Naive thymus-derived CD4-positive, alpha-beta T cell (primary cell): ENCODE measurements at regions of chr12 and their contacts with region 1.

Region 1: DNA sequence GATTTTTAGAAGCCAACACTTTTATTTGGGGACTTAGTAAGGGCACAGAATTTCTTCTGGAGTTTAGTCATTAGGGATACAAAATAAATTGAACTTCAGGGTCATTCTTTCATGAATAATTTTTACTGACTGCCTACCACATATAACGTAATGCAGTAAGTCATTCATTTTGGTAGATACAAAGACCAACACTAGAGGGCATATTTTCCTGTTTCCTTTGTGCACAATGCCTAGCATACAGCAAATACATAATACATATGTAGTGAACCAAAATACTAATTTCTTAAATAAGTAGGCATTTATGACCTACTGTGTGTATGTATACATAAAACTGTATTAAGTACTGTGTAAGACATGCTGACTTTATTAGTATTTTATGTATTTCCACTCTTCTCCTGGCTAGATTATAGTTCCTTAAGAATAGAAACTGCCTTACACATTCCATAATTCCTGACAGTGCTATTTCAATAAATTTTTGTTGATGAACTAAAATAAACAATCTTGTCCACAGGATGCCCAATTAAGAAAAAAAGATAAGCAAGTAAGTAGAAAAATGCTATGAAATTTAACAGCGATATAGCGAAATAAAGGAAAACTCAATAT is 47.9 kb downstream of the PPP1R12A start:
- DNase-seq: peak in 6 of 9 donors; percentile 10 to 45 (median 36)
- ATAC-seq: peak; percentile 91
- H3K4me3 ChIP-seq: no peak overlapping the region
- H3K4me3 Mint-ChIP-seq: peak overlapping the region in 3 of 10 donors; percentile 10 to 28 (median 11)
- H3K27ac ChIP-seq: no peak overlapping the region
- H3K27ac Mint-ChIP-seq: peak overlapping the region in 1 of 9 donors; percentile 5
- H3K4me1 ChIP-seq: peaks cover 10 to 26% of the 10 kb centered on the region in 2 donors
- H3K4me1 Mint-ChIP-seq: peaks cover 26 to 93% (median 86%) of the 10 kb centered on the region in 7 donors
- H3K27me3 ChIP-seq: no peaks in the 10 kb centered on the region
- H3K27me3 Mint-ChIP-seq: no peaks in the 10 kb centered on the region

Region 2: GRCh38 chr12:79871621-79872020 is 15.4 kb before region 1 on chr12:
- CTCF ChIA-PET with region 1: no interaction called
- POLR2A ChIA-PET with region 1: interaction called, 3 read pairs
- intact Hi-C with region 1: loop called in 1 of 2 experiments (anchors 2 kb)
- DNase-seq: no peak
- ATAC-seq: no peak
- H3K4me3 ChIP-seq: no peak overlapping the region
- H3K4me3 Mint-ChIP-seq: no peak overlapping the region
- H3K27ac ChIP-seq: no peak overlapping the region
- H3K27ac Mint-ChIP-seq: peak overlapping the region in 1 of 9 donors; percentile 38
- H3K4me1 ChIP-seq: peaks cover 0 to 6% of the 10 kb centered on the region in 2 donors
- H3K4me1 Mint-ChIP-seq: peaks cover 16 to 72% (median 55%) of the 10 kb centered on the region in 7 donors
- H3K27me3 ChIP-seq: no peaks in the 10 kb centered on the region
- H3K27me3 Mint-ChIP-seq: no peaks in the 10 kb centered on the region

Region 3: GRCh38 chr12:79935021-79935623 is 48.1 kb after region 1 on chr12 and contains the start of gene PPP1R12A:
- CTCF ChIA-PET with region 1: interaction called, 3 read pairs
- POLR2A ChIA-PET with region 1: interaction called, 3 read pairs
- intact Hi-C with region 1: loop called (anchors 1 to 2 kb)
- DNase-seq: peak; percentile 92 to 97 (median 94)
- ATAC-seq: peak; percentile 92
- H3K4me3 ChIP-seq: peak within 1 kb of the TSS; percentile 89
- H3K4me3 Mint-ChIP-seq: peak within 1 kb of the TSS; percentile 88 to 100 (median 94)
- H3K27ac ChIP-seq: peak within 1 kb of the TSS; percentile 85
- H3K27ac Mint-ChIP-seq: peak within 1 kb of the TSS; percentile 80 to 99 (median 93)
- H3K4me1 ChIP-seq: peaks cover 6 to 17% of the 10 kb centered on the region in 2 donors
- H3K4me1 Mint-ChIP-seq: peaks cover 34 to 53% (median 47%) of the 10 kb centered on the region in 7 donors
- H3K27me3 ChIP-seq: no peaks in the 10 kb centered on the region
- H3K27me3 Mint-ChIP-seq: peaks cover 0 to 2% (median 0%) of the 10 kb centered on the region in 5 donors
- total RNA-seq, gene PPP1R12A: 72.7 to 111 (median 103) TPM

Region 4: DNA sequence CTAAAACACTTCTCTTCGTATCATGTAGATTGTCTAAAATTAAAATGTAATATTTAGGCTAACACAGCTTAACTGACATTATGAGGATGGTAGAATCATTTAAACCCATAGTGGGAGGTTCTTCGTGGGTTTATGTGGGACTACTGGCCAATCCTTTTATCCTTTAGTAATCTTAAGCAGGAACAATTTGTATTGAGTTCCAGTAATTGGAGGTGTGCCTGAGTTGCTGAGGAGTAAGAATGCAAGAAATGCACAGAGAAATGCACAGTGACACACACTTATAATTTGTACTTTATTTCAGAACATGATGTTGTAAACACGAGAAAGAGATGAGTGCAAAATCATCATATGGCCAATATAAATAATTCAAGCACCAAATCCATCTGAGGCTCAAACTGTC is 234.6 kb after region 1 on chr12:
- CTCF ChIA-PET with region 1: no interaction called
- POLR2A ChIA-PET with region 1: no interaction called
- intact Hi-C with region 1: loop called in 1 of 2 experiments (anchors 5 kb)
- DNase-seq: no peak
- ATAC-seq: no peak
- H3K4me3 ChIP-seq: no peak overlapping the region
- H3K4me3 Mint-ChIP-seq: no peak overlapping the region
- H3K27ac ChIP-seq: no peak overlapping the region
- H3K27ac Mint-ChIP-seq: no peak overlapping the region
- H3K4me1 ChIP-seq: no peaks in the 10 kb centered on the region
- H3K4me1 Mint-ChIP-seq: no peaks in the 10 kb centered on the region
- H3K27me3 ChIP-seq: no peaks in the 10 kb centered on the region
- H3K27me3 Mint-ChIP-seq: peaks cover 0 to 8% (median 0%) of the 10 kb centered on the region in 5 donors

Region 5: DNA sequence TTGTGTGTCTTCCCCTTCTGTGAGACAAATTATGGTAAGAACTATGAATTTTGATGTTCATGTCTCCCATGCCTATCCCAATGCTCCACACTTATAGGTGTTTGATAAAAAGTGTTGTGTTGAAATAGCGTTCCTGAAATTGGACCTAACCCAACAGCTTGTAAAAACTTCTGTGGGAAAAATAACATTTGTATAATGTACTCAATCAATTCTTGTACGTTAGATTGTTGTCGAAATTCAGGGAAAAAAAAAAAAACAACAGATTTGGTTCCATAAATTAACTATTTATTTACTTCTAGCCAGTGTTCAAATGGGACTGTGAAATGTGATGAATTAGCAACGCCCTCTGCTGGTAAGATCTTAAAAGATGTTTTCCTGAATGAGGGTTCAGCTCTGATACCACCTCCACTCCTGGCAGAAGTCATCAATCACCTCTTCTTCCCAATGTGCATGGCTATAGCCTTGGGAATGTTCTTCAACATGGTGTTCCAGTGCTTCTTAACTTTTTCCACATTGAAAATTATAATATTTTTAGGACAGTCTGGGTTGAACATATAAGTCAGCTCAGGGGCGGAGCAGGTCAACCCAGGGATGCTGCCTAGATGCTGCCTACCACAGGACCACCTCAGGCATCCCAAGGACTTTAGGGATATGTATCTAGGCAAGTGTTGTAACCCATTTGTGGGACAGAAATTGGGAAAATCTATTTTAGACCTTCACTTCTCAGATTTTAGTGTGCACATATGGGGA is 383.0 kb after region 1 on chr12:
- CTCF ChIA-PET with region 1: interaction called, 5 read pairs
- POLR2A ChIA-PET with region 1: no interaction called
- intact Hi-C with region 1: loop called (anchors 1 kb)
- DNase-seq: peak in 3 of 9 donors; percentile 3 to 16 (median 4)
- ATAC-seq: no peak
- H3K4me3 ChIP-seq: no peak overlapping the region
- H3K4me3 Mint-ChIP-seq: no peak overlapping the region
- H3K27ac ChIP-seq: no peak overlapping the region
- H3K27ac Mint-ChIP-seq: no peak overlapping the region
- H3K4me1 ChIP-seq: no peaks in the 10 kb centered on the region
- H3K4me1 Mint-ChIP-seq: no peaks in the 10 kb centered on the region
- H3K27me3 ChIP-seq: no peaks in the 10 kb centered on the region
- H3K27me3 Mint-ChIP-seq: peaks cover 0 to 13% (median 0%) of the 10 kb centered on the region in 5 donors